ENCODE measurements at regions of chr3 and their contacts with region 1.

Region 1: DNA sequence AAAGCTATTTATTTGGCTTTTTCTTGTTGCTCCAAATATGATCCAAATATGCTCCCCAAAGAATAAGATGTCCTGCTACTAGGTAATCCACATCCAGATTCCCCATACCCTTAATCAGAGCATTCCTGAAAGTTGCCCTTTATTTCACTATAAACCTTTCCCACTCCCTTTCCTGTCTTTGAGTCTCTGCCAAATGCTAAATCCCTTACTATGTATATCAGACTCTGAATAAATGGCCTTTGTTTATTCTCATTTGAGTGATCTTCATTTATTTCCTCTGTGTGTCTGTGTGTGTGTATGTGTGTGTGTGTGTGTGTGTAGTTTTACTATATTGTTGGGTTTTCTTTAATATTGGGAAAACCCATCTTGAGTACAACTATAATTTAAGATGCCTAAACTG is 7.0 kb upstream of the SPICE1 start:
- DNase-seq: no peak
- H3K4me3 Mint-ChIP-seq: no peak overlapping the region
- H3K27ac Mint-ChIP-seq: no peak overlapping the region
- H3K4me1 Mint-ChIP-seq: no peaks in the 10 kb centered on the region
- H3K27me3 Mint-ChIP-seq: peaks cover 45% of the 10 kb centered on the region

Region 2: DNA sequence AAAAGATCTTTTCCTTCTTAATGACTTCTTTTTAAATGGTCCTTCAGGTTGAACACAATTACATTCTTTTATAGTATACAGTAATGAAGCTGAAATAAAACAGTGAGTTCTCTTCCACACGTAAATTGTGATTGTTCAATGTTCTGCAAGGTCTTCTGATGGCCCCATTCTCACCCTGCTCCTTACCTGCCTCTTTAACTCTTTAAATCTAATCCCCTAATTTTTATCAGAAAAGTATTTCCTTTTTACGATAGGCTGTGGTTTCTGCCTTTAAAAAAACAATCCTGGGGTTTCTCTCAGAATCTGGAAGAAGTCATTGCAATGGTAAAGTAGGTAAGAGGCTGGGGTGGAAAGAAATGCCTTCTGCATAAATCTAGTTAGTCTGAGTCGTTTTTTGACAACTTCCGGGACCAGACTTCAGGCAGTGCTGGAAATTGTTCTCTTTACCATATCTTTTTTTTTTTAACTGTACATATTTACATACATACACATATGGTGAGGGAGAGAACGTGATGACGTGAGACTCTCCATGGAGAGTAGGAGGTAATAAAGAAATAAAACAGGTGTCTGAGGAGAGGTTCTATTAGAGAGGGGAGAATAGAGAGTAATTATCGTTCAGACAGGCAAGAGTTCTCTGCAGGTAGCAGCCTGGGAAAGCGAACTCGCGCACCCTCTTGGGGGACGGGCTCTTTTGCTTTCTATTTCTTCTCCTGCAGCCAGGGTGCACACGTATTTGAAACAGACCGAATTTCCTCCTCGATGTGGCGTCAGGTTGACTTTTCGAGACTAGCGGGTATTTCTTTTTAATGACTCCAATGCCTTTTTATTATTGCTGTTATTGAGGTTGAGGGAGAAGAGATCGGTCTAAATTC is 10.1 kb after region 1 on chr3 and contains the start of gene SIDT1:
- intact Hi-C with region 1: loop called (anchors 1 kb)
- DNase-seq: peak; percentile 64
- H3K4me3 Mint-ChIP-seq: peak within 1 kb of the TSS; percentile 100
- H3K27ac Mint-ChIP-seq: peak within 1 kb of the TSS; percentile 99
- H3K4me1 Mint-ChIP-seq: peaks cover 55% of the 10 kb centered on the region
- H3K27me3 Mint-ChIP-seq: peaks cover 10% of the 10 kb centered on the region
- total RNA-seq, gene SIDT1: 11.3 and 12.2 TPM in 2 replicates